Colonic mucosa (tissue), 4 donors: ENCODE measurements at regions of chr6 and their contacts with region 1.

Region 1: DNA sequence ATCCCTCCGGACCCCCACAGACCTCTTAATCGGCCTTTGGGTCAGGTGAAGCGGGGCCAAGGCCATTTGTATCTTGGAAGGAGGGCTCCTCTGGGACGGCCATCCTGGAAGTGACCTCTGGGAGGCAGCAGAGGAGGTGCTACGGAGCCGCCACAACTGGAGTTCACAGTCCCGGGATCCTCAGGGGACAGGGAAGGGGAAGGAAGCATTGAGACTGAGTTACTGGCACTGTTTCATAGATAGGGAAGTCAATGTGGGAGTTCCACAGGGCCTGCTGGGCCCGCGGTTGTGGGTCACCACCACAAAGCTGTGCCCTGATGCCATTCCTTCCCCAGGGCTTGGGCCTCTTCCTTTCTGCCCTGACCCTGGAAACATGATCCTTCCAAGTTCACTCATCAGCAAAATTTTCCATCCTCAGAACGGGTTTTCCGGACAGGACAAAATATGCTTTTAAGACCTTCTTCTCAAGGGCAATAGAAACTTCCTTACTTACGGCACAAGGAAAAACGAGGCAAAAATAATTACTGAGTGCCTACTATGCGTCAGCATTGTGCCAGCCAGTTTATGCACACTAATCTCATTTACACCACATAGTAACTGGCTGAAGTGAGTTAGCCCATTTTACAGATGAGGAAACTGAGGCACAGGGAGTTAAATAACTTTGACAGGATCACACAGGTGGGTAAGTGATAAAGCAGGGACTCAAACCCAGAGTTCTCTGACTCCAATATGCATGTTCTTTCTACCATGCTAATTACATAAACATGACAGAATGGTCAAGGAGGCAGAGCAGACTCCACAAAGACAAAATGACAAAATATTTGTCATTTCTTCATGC is 143.8 kb downstream of the UNC5CL start:
- DNase-seq: peak; percentile 63
- H3K4me3 ChIP-seq: no peak overlapping the region
- H3K27ac ChIP-seq: no peak overlapping the region
- H3K4me1 ChIP-seq: no peaks in the 10 kb centered on the region
- H3K27me3 ChIP-seq: no peaks in the 10 kb centered on the region
- CTCF ChIP-seq: peak; percentile 58

Region 2: GRCh38 chr6:40978687-40979289 is 83.6 kb after region 1 on chr6:
- intact Hi-C with region 1: no loop called
- DNase-seq: no peak
- H3K4me3 ChIP-seq: no peak overlapping the region
- H3K27ac ChIP-seq: no peak overlapping the region
- H3K4me1 ChIP-seq: no peaks in the 10 kb centered on the region
- H3K27me3 ChIP-seq: peaks cover 4% of the 10 kb centered on the region
- CTCF ChIP-seq: no peak

Region 3: DNA sequence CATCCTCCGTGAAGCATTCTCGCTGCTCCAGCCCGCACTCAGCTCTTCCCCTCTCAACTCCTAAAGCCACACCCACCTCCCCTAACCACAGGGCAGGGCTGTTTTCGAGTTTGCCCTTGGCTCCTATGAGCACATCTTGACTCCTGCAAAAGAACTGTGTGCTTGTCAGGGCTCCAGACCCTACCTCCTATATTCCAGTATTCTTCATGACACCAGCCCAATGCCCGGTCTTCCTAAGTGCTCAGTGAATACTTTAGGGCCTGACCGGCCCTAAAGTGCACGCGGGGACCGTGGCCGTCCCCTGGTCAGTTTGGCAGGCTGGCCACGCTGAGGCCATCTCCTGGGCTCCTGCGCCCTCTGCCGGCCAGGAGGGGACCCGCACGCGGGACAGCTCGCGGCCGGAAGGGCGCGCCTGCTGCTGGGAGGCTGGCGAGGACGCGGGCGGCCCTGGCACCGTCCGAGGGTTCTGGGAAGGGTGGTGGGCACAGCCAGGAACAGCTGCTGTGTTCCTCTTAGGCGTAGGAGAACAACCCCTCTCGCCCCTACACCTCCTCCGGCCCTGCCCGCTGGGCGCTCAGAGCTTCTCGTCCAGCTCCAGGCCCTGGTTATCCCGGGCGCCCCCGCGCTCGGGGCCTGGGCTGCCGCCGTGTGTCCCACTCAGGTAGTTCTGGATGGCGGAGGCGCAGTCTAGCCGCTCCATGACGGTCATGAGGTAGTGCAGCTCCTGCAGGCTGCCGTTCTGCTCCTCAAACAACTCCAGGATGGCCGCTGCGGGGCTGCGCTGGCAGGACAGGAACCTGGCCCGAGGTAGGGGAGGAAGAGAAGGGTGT is 132.8 kb after region 1 on chr6:
- intact Hi-C with region 1: loop called (anchors 5 kb)
- DNase-seq: peak; percentile 89
- H3K4me3 ChIP-seq: peak overlapping the region; percentile 36
- H3K27ac ChIP-seq: peak overlapping the region; percentile 65
- H3K4me1 ChIP-seq: no peaks in the 10 kb centered on the region
- H3K27me3 ChIP-seq: no peaks in the 10 kb centered on the region
- CTCF ChIP-seq: peak; percentile 97

Region 4: DNA sequence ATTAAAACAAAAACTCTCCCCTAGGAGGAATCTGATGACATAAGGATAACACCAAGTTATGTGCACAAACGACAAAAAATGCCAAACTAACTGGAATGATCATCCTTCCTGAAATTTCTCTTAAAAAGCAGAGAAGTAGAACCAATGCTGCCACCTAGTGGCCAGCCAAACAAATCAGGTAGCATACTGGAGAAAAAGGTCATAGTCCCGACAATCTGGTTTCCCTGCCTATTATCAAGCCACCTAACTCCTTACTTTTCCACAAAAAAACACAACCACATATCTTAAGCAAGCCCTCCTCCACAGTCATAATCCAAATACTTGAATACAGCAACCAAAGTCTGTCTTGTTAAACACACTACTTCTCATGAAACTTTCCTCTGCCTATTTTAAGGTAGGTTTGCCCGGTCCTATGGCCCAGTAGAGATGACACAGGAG is 171.7 kb after region 1 on chr6:
- intact Hi-C with region 1: loop called (anchors 5 kb)
- DNase-seq: peak; percentile 88
- H3K4me3 ChIP-seq: no peak overlapping the region
- H3K27ac ChIP-seq: peak overlapping the region; percentile 76
- H3K4me1 ChIP-seq: peaks cover 13% of the 10 kb centered on the region
- H3K27me3 ChIP-seq: no peaks in the 10 kb centered on the region
- CTCF ChIP-seq: peak; percentile 91